Psoas muscle (tissue), 8 donors: ENCODE measurements at regions of chr14 and their contacts with region 1.

Region 1: GRCh38 chr14:105414456-105415371 is 4.9 kb upstream of the MTA1 start:
- DNase-seq: peak; percentile 87 to 94
- ATAC-seq: peak; percentile 82 to 88 (median 86)
- H3K4me3 ChIP-seq: peak overlapping the region; percentile 67
- H3K27ac ChIP-seq: peak overlapping the region; percentile 81
- H3K4me1 ChIP-seq: peaks cover 23% of the 10 kb centered on the region
- H3K27me3 ChIP-seq: peaks cover 0 to 2% (median 0%) of the 10 kb centered on the region in 3 donors
- CTCF ChIP-seq: peak; percentile 79

Region 2: DNA sequence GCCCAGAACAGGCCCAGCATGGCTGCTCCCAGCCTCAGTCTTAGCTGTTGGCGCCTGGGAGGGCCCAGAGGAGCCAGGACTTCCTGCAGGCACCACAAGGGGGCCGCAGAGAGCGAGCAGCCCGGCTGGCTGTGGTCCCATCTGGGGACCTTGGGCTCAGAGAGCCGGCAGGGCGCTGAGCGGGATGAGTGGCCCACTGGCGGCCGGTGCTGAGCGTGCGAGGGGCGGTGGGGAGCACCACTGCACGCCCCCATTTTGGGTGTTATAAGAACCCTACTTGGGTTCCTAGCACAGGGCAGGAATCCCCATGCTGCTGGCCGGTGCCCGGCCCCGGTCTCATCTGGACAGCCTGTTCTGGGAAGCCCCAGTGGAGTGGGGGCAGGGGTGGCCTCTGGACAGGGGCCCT is 34.0 kb after region 1 on chr14:
- intact Hi-C with region 1: no loop called
- DNase-seq: peak; percentile 76 to 88
- ATAC-seq: peak; percentile 83 to 94 (median 88)
- H3K4me3 ChIP-seq: peak overlapping the region; percentile 2
- H3K27ac ChIP-seq: no peak overlapping the region
- H3K4me1 ChIP-seq: peaks cover 6% of the 10 kb centered on the region
- H3K27me3 ChIP-seq: no peaks in the 10 kb centered on the region
- CTCF ChIP-seq: peak; percentile 94

Region 3: DNA sequence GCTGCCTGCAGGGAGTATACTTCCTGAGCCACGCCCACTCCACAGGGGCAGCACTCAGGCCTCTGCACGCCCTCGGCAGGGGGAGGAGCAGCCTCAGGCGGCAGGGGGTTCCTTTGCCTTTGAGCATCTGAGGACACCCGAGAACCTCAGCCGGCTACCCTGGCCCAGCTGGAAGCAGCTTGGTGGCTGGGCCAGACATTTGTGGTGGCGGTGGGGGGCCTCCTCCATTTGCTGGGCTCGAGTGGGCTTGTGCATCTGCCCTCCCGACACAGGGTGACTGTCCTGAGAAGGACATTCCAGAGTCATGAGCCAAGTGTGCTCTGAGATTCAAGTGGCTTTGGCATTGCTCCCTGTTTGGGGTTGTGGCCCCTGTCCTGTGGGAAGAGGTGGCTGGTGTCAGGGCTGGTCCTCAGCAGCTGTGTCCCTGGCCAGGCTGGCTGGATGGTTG is 50.9 kb after region 1 on chr14:
- intact Hi-C with region 1: loop called in 1 of 2 experiments (anchors 5 kb)
- DNase-seq: no peak
- ATAC-seq: peak; percentile 56 to 77 (median 67)
- H3K4me3 ChIP-seq: no peak overlapping the region
- H3K27ac ChIP-seq: peak overlapping the region; percentile 53
- H3K4me1 ChIP-seq: peaks cover 26% of the 10 kb centered on the region
- H3K27me3 ChIP-seq: no peaks in the 10 kb centered on the region
- CTCF ChIP-seq: no peak